Dorsolateral prefrontal cortex (tissue), 120 donors: ENCODE measurements at regions of chr1 and their contacts with region 1.

Region 1: GRCh38 chr1:154479764-154480421 is 22.1 kb upstream of the TDRD10 start:
- DNase-seq: peak in 6 of 10 donors; percentile 43 to 78 (median 60)
- H3K4me3 ChIP-seq: peak overlapping the region in 5 of 59 donors; percentile 4 to 31 (median 6)
- H3K27ac ChIP-seq: peak overlapping the region in 35 of 59 donors; percentile 1 to 75 (median 40)
- H3K27me3 ChIP-seq: no peaks in the 10 kb centered on the region
- CTCF ChIP-seq: peak; percentile 86 to 99 (median 95)

Region 2: DNA sequence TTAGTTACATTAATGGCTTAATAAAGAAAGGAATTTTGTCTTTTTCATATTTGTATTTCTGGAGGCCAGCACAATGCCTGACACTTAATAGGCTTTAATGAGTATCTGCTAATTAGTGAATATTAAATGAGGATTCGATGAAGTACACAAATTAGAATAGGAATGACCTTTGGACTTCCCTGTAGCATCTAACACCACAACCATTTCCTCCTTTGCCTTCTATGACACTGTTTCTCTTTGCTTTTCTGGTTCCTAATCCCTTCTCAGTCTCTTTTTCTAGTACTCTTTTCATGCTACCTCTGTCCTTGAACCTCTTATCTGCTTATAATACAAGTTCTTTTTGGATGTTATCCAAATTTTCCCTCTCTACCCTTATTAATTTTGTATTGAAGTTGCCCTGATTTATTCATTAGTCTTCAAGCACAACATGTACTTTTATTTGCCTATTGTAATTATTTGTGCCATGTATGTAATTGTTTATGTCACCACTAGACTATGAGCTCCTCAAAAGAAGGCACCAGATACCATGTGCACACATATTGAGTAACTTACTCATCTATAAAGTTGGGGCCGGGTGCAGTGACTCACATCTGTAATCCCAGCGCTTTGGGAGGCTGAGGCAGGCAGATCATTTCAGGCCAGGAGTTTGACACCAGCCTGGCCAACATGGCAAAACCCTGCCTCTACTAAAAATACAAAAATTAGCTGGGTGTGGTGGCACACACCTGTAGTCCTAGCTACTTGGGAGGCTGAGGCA is 465.6 kb before region 1 on chr1:
- intact Hi-C with region 1: no loop called
- DNase-seq: no peak
- H3K4me3 ChIP-seq: no peak overlapping the region
- H3K27ac ChIP-seq: no peak overlapping the region
- H3K27me3 ChIP-seq: no peaks in the 10 kb centered on the region
- CTCF ChIP-seq: no peak

Region 3: DNA sequence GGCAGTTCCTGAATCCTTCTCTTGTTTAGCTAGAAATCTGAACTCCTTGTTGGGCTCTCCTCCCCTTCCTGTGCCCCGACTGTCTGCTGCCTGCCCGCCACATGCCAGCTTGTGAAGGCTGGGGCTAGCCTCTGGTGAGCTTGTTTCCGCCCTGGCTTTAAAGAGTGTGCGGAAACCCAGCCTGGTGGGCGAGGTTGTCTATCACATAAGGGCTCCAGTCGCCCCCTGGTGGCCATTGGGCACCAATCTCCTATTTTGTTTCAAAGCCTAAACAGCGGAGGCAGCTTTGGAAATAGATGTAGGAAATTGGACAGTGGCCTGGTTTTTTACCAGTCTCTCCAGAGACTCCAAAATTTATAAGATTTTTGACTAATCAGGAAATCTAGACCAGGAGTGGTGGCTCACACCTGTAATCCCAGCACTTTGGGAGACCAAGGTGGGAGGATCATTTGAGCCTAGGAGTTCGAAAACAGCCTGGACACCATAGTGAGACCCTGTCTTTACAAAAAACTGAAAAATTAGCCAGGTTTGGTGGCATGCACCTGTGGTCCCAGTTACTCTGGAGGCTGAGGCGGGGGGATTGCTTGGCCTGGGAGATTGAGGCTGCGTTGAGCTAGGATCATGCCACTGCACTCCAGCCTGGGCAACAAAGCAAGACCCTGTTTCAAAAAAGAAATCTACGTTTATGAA is 144.7 kb before region 1 on chr1:
- intact Hi-C with region 1: loop called in 1 of 2 experiments (anchors 10 kb)
- DNase-seq: peak; percentile 69 to 89 (median 79)
- H3K4me3 ChIP-seq: peak overlapping the region in 3 of 59 donors; percentile 4 to 26 (median 4)
- H3K27ac ChIP-seq: peak overlapping the region in 46 of 59 donors; percentile 2 to 78 (median 56)
- H3K27me3 ChIP-seq: no peaks in the 10 kb centered on the region
- CTCF ChIP-seq: peak; percentile 70 to 93 (median 87)

Region 4: GRCh38 chr1:154404984-154405761 is 74.7 kb before region 1 on chr1 and contains the start of gene IL6R:
- intact Hi-C with region 1: loop called in 1 of 2 experiments (anchors 5 kb)
- DNase-seq: peak; percentile 43 to 93 (median 75)
- H3K4me3 ChIP-seq: peak within 1 kb of the TSS; percentile 48 to 84 (median 75)
- H3K27ac ChIP-seq: peak within 1 kb of the TSS in 58 of 59 donors; percentile 58 to 98 (median 87)
- H3K27me3 ChIP-seq: no peaks in the 10 kb centered on the region
- CTCF ChIP-seq: peak in 54 of 56 donors; percentile 14 to 72 (median 48)
- total RNA-seq, gene IL6R: 5.2 to 32.5 (median 12.2) TPM

Region 5: GRCh38 chr1:154419620-154420571 is 60.0 kb before region 1 on chr1:
- intact Hi-C with region 1: loop called in 1 of 2 experiments (anchors 10 kb)
- DNase-seq: peak; percentile 33 to 88 (median 78)
- H3K4me3 ChIP-seq: peak overlapping the region in 23 of 59 donors; percentile 1 to 40 (median 20)
- H3K27ac ChIP-seq: peak overlapping the region; percentile 29 to 96 (median 87)
- H3K27me3 ChIP-seq: no peaks in the 10 kb centered on the region
- CTCF ChIP-seq: no peak

Region 6: DNA sequence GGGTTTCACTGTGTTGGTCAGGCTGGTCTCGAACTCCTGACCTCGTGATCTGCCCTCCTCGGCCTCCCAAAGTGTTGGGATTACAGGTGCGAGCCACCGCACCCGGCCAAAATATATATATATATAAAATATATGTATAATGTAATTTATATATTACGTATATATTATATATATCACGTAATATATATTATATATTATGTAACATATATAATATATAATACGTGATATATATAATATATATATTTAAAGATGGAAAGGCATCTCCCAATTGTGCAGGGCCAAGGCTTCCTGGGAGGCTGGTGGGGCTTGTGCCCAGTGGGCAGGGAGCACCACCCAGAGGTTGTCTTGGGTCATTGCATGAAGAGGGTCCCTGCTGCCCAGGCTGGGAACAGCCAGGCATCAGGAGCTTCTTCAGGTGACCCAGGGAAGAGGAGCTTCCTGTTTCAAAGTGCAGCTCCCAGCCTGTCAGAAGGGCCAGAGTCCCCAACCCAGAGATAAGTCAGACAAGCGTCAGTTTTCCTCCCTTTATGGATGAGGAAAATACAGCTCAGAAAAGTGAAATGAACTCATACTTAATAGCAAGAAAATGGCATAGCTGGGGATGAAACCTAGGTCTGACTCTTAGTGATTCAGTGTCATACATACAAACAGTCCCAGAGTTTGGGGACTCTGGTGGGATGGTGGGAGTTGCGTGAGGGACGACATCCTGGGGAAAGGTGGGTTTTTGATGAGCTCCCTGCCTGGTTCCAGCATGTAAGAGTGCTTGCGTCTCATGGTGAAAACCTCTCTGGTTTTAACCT is 66.6 kb after region 1 on chr1:
- intact Hi-C with region 1: loop called (anchors 2 to 5 kb)
- DNase-seq: peak in 8 of 10 donors; percentile 15 to 69 (median 57)
- H3K4me3 ChIP-seq: no peak overlapping the region
- H3K27ac ChIP-seq: peak overlapping the region in 1 of 59 donors; percentile 16
- H3K27me3 ChIP-seq: no peaks in the 10 kb centered on the region
- CTCF ChIP-seq: peak; percentile 32 to 81 (median 72)

Region 7: DNA sequence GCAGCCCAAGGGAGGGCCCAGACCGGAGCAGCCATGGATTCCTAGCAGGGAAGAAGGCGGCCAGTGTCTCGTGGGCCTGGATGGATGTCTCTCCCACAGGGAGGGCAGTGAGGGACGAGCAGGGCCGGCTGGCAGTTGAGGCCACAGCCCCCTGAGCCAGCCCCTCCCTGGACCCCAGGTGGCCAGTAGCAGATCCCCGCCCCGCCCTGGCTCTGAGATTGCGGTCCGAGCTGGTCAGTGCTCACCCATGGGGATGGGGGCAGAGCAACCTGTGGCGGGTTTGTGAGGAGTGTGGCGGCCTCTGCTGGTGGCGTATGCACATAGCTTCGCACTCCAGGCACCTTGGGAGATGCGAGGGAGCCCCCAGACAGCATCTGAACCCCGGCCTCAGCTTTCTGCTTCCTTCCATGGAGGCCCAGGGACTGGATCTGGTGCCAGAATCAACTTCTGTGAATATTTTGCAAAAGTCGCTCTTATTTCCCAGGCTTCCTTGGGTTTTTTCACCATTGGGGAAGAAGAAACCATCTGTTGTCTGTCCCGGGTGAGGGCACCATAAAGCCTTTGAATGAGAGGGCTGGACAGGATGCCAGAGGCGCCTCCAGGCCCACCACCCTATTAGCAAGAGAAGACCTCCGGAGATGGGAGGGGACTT is 398.6 kb after region 1 on chr1:
- intact Hi-C with region 1: loop called (anchors 2 to 5 kb)
- DNase-seq: peak; percentile 78 to 90 (median 82)
- H3K4me3 ChIP-seq: peak overlapping the region in 26 of 59 donors; percentile 6 to 47 (median 32)
- H3K27ac ChIP-seq: no peak overlapping the region
- H3K27me3 ChIP-seq: no peaks in the 10 kb centered on the region
- CTCF ChIP-seq: peak; percentile 54 to 97 (median 92)